Naive thymus-derived CD4-positive, alpha-beta T cell (primary cell): ENCODE measurements at regions of chr6 and their contacts with region 1.

Region 1: GRCh38 chr6:27672113-27672799 is 199.4 kb upstream of the ZNF184 start:
- DNase-seq: no peak
- ATAC-seq: no peak
- H3K4me3 ChIP-seq: no peak overlapping the region
- H3K4me3 Mint-ChIP-seq: peak overlapping the region in 8 of 10 donors; percentile 0 to 55 (median 18)
- H3K27ac ChIP-seq: no peak overlapping the region
- H3K27ac Mint-ChIP-seq: peak overlapping the region in 6 of 9 donors; percentile 14 to 70 (median 36)
- H3K4me1 ChIP-seq: peaks cover 0 to 8% of the 10 kb centered on the region in 2 donors
- H3K4me1 Mint-ChIP-seq: peaks cover 10 to 45% (median 32%) of the 10 kb centered on the region in 7 donors
- H3K27me3 ChIP-seq: peaks cover 29 to 54% of the 10 kb centered on the region in 2 donors
- H3K27me3 Mint-ChIP-seq: peaks cover 76 to 95% (median 89%) of the 10 kb centered on the region in 5 donors

Region 2: DNA sequence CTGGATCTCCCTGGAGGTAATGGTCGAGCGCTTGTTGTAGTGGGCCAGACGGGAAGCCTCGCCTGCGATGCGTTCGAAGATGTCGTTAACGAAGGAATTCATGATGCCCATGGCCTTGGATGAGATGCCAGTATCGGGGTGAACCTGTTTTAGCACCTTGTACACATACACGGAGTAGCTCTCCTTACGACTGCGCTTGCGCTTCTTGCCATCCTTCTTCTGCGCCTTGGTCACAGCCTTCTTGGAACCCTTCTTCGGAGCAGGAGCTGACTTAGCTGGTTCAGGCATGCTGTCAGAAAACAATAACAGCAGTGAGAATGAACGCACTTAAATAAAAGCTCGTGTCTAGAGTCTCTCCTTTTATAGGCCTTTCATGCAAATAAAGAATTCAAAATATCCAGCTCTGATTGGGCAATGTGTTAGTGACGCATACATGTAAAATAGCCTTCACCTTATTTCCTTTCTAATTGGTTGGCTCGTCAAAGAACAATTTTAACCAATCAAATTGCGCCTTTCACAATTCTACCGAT is 1455.8 kb before region 1 on chr6:
- CTCF ChIA-PET with region 1: no interaction called
- POLR2A ChIA-PET with region 1: no interaction called
- intact Hi-C with region 1: no loop called
- DNase-seq: peak; percentile 56 to 97 (median 93)
- ATAC-seq: peak; percentile 86
- H3K4me3 ChIP-seq: peak overlapping the region; percentile 72
- H3K4me3 Mint-ChIP-seq: no peak overlapping the region
- H3K27ac ChIP-seq: peak overlapping the region; percentile 84
- H3K27ac Mint-ChIP-seq: no peak overlapping the region
- H3K4me1 ChIP-seq: peaks cover 12 to 18% of the 10 kb centered on the region in 2 donors
- H3K4me1 Mint-ChIP-seq: peaks cover 3 to 31% (median 10%) of the 10 kb centered on the region in 7 donors
- H3K27me3 ChIP-seq: no peaks in the 10 kb centered on the region
- H3K27me3 Mint-ChIP-seq: no peaks in the 10 kb centered on the region

Region 3: DNA sequence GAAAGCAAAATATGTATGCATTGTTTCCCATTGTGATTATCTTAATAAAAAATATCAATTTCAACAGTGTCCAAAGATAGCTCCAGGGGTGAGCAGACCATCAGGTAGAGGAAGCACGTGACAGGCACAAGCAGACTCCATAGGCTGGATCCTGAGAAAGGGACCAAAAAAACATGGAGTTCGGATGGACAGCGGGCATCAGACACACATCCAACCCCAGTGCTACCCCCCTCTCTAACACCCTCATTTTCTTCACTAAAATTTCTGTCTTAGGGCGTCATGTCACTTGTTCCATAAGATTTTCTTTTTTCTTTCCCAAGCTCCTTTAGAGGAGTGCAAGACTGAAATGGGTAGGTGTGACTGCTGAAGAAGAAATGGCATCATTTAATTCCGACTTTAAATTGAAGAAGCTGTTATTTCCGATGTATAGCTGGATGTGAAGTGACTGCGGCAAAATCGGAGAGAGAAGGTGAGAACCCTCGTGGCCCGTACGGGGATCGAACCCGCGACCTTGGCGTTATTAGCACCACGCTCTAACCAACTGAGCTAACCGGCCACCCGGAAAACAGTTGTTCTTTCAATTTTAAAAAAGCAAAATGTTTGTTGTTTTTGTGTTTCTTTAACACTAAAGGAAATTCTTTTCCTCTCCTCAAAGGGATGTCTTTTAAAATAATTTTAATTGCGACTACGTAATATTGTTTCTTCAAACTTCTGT is 435.0 kb before region 1 on chr6:
- CTCF ChIA-PET with region 1: no interaction called
- POLR2A ChIA-PET with region 1: no interaction called
- intact Hi-C with region 1: loop called in 1 of 2 experiments (anchors 5 kb)
- DNase-seq: peak in 5 of 9 donors; percentile 16 to 50 (median 29)
- ATAC-seq: no peak
- H3K4me3 ChIP-seq: no peak overlapping the region
- H3K4me3 Mint-ChIP-seq: peak overlapping the region in 6 of 10 donors; percentile 7 to 78 (median 43)
- H3K27ac ChIP-seq: no peak overlapping the region
- H3K27ac Mint-ChIP-seq: peak overlapping the region in 6 of 9 donors; percentile 43 to 76 (median 52)
- H3K4me1 ChIP-seq: peaks cover 0 to 6% of the 10 kb centered on the region in 2 donors
- H3K4me1 Mint-ChIP-seq: peaks cover 3 to 30% (median 18%) of the 10 kb centered on the region in 7 donors
- H3K27me3 ChIP-seq: peaks cover 10 to 42% of the 10 kb centered on the region in 2 donors
- H3K27me3 Mint-ChIP-seq: peaks cover 63 to 82% (median 80%) of the 10 kb centered on the region in 5 donors

Region 4: GRCh38 chr6:27295301-27296081 is 376.8 kb before region 1 on chr6:
- CTCF ChIA-PET with region 1: no interaction called
- POLR2A ChIA-PET with region 1: interaction called, 3 read pairs
- intact Hi-C with region 1: loop called (anchors 5 kb)
- DNase-seq: no peak
- ATAC-seq: no peak
- H3K4me3 ChIP-seq: no peak overlapping the region
- H3K4me3 Mint-ChIP-seq: peak overlapping the region in 4 of 10 donors; percentile 0 to 81 (median 34)
- H3K27ac ChIP-seq: no peak overlapping the region
- H3K27ac Mint-ChIP-seq: peak overlapping the region in 6 of 9 donors; percentile 44 to 89 (median 57)
- H3K4me1 ChIP-seq: no peaks in the 10 kb centered on the region
- H3K4me1 Mint-ChIP-seq: peaks cover 0 to 4% (median 0%) of the 10 kb centered on the region in 7 donors
- H3K27me3 ChIP-seq: peaks cover 21 to 66% of the 10 kb centered on the region in 2 donors
- H3K27me3 Mint-ChIP-seq: peaks cover 65 to 94% (median 87%) of the 10 kb centered on the region in 5 donors

Region 5: GRCh38 chr6:27592481-27593199 is 79.6 kb before region 1 on chr6:
- CTCF ChIA-PET with region 1: no interaction called
- POLR2A ChIA-PET with region 1: no interaction called
- intact Hi-C with region 1: loop called in 1 of 2 experiments (anchors 5 kb)
- DNase-seq: peak in 4 of 9 donors; percentile 10 to 58 (median 28)
- ATAC-seq: no peak
- H3K4me3 ChIP-seq: no peak overlapping the region
- H3K4me3 Mint-ChIP-seq: no peak overlapping the region
- H3K27ac ChIP-seq: no peak overlapping the region
- H3K27ac Mint-ChIP-seq: no peak overlapping the region
- H3K4me1 ChIP-seq: peaks cover 0 to 11% of the 10 kb centered on the region in 2 donors
- H3K4me1 Mint-ChIP-seq: peaks cover 0 to 4% (median 0%) of the 10 kb centered on the region in 7 donors
- H3K27me3 ChIP-seq: peaks cover 25 to 29% of the 10 kb centered on the region in 2 donors
- H3K27me3 Mint-ChIP-seq: peaks cover 24 to 46% (median 43%) of the 10 kb centered on the region in 5 donors

Region 6: DNA sequence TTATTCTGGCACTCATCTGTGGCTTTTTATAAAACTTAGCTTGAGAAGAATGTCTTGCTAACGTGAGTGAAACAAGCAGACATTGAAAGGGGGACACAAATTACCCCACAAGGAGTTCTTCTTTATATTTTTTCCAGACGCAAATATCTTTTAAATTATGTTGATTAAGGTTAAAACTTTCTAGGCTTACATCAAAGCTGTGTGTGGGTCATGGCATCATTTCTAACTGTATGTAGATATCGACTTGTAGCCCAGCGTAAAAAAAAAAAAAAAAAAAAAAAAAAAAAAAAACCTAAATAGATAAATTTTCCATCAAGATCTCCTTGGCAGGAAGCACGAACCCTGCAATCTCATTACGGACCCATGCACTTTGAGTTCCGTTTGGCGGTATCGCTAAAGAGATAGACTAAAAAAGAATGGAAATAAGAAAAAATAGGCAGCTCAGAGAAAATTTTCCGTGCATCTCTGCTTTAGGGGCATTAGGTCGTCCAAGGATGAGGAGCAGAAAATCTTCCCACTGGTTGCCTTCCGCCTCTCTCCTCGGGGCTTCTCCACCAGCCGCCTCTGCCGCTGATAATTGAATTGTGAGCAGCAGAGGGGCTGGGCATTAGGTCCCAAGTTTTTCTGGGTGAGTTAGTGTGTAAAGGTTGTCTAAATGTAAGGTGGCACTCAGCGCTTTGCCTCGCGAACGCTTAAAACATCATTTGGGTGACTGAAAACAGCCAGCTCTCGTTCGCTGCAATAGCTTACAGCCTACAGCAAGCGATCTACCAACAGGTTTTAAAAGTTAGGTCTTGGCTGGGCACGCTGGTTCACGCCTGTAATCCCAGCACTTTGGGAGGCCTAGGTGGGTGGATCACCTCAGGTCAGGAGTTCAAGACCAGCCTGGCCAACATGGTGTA is 1057.5 kb after region 1 on chr6:
- CTCF ChIA-PET with region 1: no interaction called
- POLR2A ChIA-PET with region 1: no interaction called
- intact Hi-C with region 1: loop called in 1 of 2 experiments (anchors 10 kb)
- DNase-seq: no peak
- ATAC-seq: no peak
- H3K4me3 ChIP-seq: peak overlapping the region; percentile 49
- H3K4me3 Mint-ChIP-seq: peak overlapping the region; percentile 55 to 88 (median 84)
- H3K27ac ChIP-seq: no peak overlapping the region
- H3K27ac Mint-ChIP-seq: peak overlapping the region in 8 of 9 donors; percentile 8 to 93 (median 74)
- H3K4me1 ChIP-seq: peaks cover 3 to 5% of the 10 kb centered on the region in 2 donors
- H3K4me1 Mint-ChIP-seq: peaks cover 10 to 30% (median 22%) of the 10 kb centered on the region in 7 donors
- H3K27me3 ChIP-seq: peaks cover 11 to 42% of the 10 kb centered on the region in 2 donors
- H3K27me3 Mint-ChIP-seq: peaks cover 87 to 96% (median 92%) of the 10 kb centered on the region in 5 donors